Activated CD4-positive, alpha-beta memory T cell treated with anti-CD3 and anti-CD28 coated beads for 36 hours (primary cell): ENCODE measurements at regions of chr12 and their contacts with region 1.

Region 1: DNA sequence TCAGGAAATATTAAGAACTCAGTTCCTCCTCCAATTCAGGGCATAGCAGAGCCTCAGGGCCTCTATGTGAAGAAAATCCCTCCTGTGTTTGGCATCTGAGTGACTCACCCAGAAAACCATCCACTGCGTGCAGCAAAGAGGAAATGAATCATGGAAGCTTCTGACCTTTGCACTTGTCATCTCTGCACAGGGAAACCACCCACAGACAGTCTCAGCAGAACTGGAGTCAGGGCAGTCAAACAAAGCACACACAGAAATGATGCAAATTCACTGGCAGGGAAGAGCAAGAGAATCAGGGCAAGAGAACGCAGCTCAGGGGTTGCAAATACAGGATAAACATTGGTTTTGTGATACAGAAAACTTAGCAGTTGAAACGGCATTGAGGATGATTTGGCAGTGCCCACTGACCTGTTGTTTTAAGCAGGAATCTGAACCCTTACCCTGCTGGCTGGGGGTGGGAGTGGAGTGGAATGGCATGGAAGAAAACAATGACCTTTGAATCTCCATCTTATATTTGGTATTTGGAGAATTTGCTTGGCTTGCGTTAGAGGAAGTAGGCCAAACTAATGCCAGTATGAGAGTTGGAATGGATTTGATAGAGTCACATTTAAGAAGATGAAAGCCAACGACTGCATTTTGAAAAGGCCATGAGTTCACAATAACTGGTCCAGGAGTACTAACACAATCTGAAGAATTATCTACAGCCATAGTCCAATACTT is 53.5 kb downstream of the PHLDA1 start:
- DNase-seq: peak; percentile 88
- H3K4me3 Mint-ChIP-seq: peak overlapping the region; percentile 34
- H3K27ac Mint-ChIP-seq: peak overlapping the region; percentile 97
- H3K4me1 Mint-ChIP-seq: peaks cover 63% of the 10 kb centered on the region
- H3K27me3 Mint-ChIP-seq: no peaks in the 10 kb centered on the region

Region 2: GRCh38 chr12:75086091-75087038 is 891.7 kb before region 1 on chr12:
- CTCF ChIA-PET with region 1: no interaction called
- POLR2A ChIA-PET with region 1: no interaction called
- intact Hi-C with region 1: no loop called
- DNase-seq: no peak
- H3K4me3 Mint-ChIP-seq: no peak overlapping the region
- H3K27ac Mint-ChIP-seq: no peak overlapping the region
- H3K4me1 Mint-ChIP-seq: no peaks in the 10 kb centered on the region
- H3K27me3 Mint-ChIP-seq: no peaks in the 10 kb centered on the region

Region 3: DNA sequence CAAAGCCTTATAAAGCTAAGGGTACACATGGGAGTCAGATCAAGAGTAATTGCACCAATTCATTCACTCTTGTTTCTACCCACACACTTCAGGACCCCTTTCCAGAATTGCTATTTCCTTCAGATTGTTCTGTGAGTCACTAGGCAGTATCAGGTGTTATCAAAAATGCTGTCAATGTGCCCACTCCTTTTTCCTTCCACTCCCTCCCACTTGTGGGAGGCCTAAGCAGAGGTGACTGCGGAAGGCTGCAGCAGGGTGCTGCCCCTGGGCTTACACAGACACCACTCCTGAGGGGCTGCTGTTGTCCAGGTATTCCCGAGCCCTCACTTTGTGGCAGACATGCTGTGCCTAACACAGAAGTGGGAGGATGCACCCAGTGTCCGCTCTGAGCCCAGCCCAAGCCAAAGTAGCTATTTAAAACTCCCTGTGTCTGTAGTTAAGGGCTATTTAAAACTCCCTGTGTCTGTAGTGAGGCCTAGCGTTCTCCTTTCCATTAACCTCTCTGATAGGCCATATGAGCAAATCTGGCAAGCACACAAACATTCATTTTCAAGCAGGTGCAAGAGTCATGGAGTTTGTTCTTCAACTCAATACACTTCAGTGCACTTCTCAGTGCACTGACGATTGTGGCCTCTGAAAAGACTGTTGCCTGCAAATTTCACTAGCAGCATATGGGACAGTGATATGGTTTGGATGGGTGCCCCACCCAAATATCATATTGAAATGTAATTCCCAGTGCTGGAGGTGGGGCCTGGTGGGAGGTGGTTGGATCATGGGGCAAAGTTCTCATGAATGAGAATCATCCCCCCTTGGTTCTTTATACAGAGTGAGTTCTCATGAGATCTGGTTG is 64.4 kb before region 1 on chr12:
- CTCF ChIA-PET with region 1: no interaction called
- POLR2A ChIA-PET with region 1: interaction called, 4 read pairs
- intact Hi-C with region 1: loop called (anchors 1 kb)
- DNase-seq: peak; percentile 73
- H3K4me3 Mint-ChIP-seq: no peak overlapping the region
- H3K27ac Mint-ChIP-seq: peak overlapping the region; percentile 9
- H3K4me1 Mint-ChIP-seq: peaks cover 28% of the 10 kb centered on the region
- H3K27me3 Mint-ChIP-seq: no peaks in the 10 kb centered on the region

Region 4: GRCh38 chr12:75933101-75933500 is 45.0 kb before region 1 on chr12:
- CTCF ChIA-PET with region 1: no interaction called
- POLR2A ChIA-PET with region 1: interaction called, 9 read pairs
- intact Hi-C with region 1: loop called (anchors 1 kb)
- DNase-seq: no peak
- H3K4me3 Mint-ChIP-seq: no peak overlapping the region
- H3K27ac Mint-ChIP-seq: no peak overlapping the region
- H3K4me1 Mint-ChIP-seq: peaks cover 20% of the 10 kb centered on the region
- H3K27me3 Mint-ChIP-seq: no peaks in the 10 kb centered on the region

Region 5: DNA sequence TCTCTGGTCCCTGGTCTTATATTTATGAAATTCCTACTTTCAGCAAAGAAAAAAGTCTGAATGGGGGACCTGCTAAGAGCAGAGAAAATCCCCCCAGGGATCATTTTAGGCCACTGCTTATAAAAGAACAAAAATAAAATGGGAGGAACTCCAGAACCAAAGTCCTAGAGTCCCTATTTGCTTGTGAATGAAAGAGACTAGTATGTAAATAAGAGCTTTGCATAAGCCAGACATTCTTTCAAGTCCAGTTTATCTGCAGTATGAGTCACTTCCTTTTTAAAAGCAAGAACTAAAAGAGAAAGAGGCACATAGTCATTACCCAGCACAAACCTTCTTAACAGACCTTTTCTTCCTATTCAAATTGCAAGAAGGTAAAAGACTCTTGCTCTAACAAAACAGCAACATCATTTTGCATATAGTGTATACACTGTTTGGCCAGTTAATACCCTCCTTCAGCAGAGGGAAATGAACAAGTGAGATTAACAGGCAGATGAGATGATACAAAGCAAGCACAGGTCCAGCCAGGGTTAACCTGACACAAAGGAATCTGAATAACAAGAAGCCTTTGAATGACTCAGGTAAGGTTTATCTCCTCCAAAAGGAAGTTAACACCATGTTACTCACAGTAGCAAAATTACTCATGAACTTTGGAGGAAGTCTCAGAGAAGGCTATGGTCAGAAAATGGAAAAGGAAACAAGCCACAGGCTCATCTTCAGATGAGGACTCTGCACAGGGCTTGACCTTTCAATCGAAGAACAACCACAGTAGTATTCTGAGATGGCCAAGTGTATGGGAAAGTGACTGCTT is 33.8 kb before region 1 on chr12:
- CTCF ChIA-PET with region 1: no interaction called
- POLR2A ChIA-PET with region 1: interaction called, 16 read pairs
- intact Hi-C with region 1: loop called (anchors 1 kb)
- DNase-seq: peak; percentile 42
- H3K4me3 Mint-ChIP-seq: peak overlapping the region; percentile 34
- H3K27ac Mint-ChIP-seq: peak overlapping the region; percentile 95
- H3K4me1 Mint-ChIP-seq: peaks cover 29% of the 10 kb centered on the region
- H3K27me3 Mint-ChIP-seq: no peaks in the 10 kb centered on the region

Region 6: DNA sequence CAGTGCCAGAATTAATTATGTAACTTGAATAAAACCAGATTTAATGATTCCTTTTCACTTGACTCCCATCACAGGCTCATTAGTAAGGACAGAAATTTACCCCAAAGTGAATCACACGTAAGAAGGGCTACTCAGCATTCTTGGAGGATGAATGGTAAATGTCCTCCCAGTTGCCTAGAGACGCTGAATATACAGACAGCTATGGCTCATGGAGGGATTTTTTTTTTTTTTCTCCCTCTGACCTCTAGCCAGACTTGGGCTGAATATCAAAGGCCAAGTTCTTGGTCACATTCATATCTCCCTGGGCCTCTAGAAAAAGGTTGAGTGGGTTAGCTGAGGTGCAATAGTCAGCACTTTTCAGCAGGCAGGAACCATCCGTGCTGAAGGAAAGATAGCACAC is 24.1 kb before region 1 on chr12:
- CTCF ChIA-PET with region 1: no interaction called
- POLR2A ChIA-PET with region 1: no interaction called
- intact Hi-C with region 1: loop called (anchors 1 kb)
- DNase-seq: no peak
- H3K4me3 Mint-ChIP-seq: no peak overlapping the region
- H3K27ac Mint-ChIP-seq: no peak overlapping the region
- H3K4me1 Mint-ChIP-seq: peaks cover 16% of the 10 kb centered on the region
- H3K27me3 Mint-ChIP-seq: no peaks in the 10 kb centered on the region

Region 7: DNA sequence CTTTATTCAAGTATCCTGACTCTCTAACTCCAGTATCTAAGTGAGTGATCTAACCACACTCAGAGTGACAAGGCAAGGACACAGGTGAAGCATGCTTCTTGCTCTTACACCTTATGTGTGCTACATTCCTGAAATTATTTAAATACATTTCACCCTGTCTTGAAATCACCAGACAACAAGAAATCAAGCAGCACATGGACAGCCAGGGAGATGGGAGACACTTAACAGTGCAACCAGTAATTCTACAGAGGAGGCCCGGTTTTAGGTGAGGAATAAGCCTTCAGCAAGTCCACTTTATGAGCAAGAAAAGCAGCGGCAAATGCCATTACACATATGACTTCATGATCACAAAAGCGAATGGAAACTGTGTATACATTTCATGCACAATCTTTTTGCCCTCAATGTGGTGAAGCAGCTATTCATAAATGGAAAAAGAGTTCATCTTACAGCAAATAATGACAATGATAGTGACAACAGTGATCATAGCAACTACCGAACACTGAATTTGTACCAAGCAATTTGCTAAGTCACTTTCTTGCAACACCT is 16.1 kb after region 1 on chr12:
- CTCF ChIA-PET with region 1: no interaction called
- POLR2A ChIA-PET with region 1: interaction called, 5 read pairs
- intact Hi-C with region 1: loop called (anchors 1 kb)
- DNase-seq: peak; percentile 45
- H3K4me3 Mint-ChIP-seq: no peak overlapping the region
- H3K27ac Mint-ChIP-seq: peak overlapping the region; percentile 70
- H3K4me1 Mint-ChIP-seq: peaks cover 29% of the 10 kb centered on the region
- H3K27me3 Mint-ChIP-seq: no peaks in the 10 kb centered on the region